ENCODE measurements at regions of chr17 and their contacts with region 1.

Region 1: DNA sequence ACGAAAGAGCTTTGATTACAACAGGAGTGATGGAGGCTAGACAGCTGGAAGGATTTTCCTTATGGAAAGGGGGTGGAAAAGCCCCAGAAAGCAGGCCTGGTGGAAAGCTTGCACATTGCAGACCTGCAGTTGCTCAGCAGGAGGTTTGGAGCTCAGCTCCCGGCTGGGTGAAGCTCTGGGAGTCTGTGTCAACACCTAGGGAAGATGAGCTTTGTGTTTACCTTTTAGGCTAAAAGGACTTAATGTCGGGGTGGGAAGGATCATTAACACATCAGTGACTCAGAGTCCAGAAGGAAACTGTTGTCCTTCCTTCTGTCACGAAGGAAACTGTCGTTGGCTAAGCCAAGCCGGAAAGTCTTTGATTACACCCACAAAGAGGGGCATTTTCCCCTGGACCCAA is 48.2 kb downstream of the RAP1GAP2 start:
- DNase-seq: no peak
- H3K4me3 ChIP-seq: no peak overlapping the region
- H3K27me3 ChIP-seq: no peaks in the 10 kb centered on the region
- CTCF ChIP-seq: 0 out of 2 replicates have a peak, but pooled peaks have one; percentile 13

Region 2: DNA sequence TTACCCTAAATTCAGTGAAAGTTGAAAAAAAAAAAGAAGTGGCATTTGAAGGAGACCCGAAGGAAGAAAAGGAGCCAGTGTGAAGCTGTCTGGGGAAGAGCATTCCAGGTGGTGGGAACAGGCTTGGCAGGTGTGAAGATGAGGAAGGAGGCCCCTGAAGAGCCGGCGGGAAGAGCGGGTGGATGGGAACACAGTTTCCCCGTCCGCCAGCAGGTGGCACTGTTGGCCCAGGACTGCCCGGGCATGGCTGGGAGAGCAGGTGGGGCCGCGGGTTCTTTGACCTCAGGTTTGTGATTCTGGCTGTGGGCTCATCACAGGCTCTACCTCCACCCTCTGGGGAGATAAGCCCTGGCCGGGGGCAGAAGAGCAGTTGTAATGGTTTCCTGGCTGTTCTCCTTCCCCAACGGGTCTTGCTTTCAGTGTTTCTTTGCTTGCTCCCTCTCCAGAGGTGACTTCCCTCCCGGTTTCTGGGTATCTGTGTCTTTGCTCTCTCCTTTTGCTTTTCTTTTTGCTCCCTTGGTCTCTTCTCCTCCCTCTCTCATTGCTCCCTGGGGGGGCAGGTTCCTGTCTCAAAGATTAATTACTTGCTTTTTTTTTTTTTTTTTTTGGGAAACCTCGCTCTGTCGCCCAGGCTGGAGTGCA is 15.9 kb before region 1 on chr17:
- CTCF ChIA-PET with region 1: interaction called, 25 read pairs
- POLR2A ChIA-PET with region 1: no interaction called
- DNase-seq: no peak
- H3K4me3 ChIP-seq: no peak overlapping the region
- H3K27me3 ChIP-seq: no peaks in the 10 kb centered on the region
- CTCF ChIP-seq: peak; percentile 95

Region 3: GRCh38 chr17:2867441-2868424 is 23.3 kb after region 1 on chr17:
- CTCF ChIA-PET with region 1: interaction called, 13 read pairs
- POLR2A ChIA-PET with region 1: no interaction called
- DNase-seq: peak; percentile 62
- H3K4me3 ChIP-seq: no peak overlapping the region
- H3K27me3 ChIP-seq: no peaks in the 10 kb centered on the region
- CTCF ChIP-seq: peak; percentile 47

Region 4: GRCh38 chr17:2982854-2983253 is 138.4 kb after region 1 on chr17:
- CTCF ChIA-PET with region 1: interaction called, 11 read pairs
- POLR2A ChIA-PET with region 1: no interaction called
- DNase-seq: peak; percentile 59
- H3K4me3 ChIP-seq: no peak overlapping the region
- H3K27me3 ChIP-seq: no peaks in the 10 kb centered on the region
- CTCF ChIP-seq: peak; percentile 70

Region 5: DNA sequence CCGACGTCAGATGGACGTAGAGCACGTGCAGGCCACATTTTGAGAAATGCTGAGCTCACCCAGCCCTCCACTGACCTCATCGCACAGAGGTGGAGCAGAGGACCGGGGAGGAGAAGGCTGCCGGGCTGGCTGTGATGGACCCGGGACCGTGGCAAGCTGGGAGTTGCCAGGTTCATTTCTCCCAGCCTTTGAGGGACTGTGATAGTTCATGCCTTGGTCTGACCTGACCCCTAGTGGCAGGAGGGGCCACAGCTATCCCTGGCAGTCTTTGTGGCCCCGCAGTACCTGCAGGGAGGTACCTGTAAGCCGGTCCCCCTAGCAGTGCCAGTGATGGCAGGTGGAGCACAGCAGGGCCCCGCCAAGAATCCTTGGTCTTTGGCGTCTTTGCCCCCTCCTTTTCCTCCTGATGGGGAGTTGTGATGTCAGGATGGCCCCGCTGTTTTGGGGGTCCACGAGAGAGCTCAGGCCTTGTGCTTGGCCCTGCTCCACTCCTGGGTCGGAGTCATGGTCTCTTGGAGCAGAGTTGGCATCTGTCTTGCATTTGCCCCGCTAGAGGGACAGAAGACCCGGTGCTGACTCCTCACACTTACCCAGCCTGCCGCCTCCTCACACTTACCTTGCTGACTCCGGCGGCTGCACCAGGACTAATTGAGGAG is 168.6 kb after region 1 on chr17:
- CTCF ChIA-PET with region 1: interaction called, 83 read pairs
- POLR2A ChIA-PET with region 1: no interaction called
- DNase-seq: no peak
- H3K4me3 ChIP-seq: no peak overlapping the region
- H3K27me3 ChIP-seq: no peaks in the 10 kb centered on the region
- CTCF ChIP-seq: peak; percentile 84